ENCODE measurements at regions of chr9 and their contacts with region 1.

Region 1: DNA sequence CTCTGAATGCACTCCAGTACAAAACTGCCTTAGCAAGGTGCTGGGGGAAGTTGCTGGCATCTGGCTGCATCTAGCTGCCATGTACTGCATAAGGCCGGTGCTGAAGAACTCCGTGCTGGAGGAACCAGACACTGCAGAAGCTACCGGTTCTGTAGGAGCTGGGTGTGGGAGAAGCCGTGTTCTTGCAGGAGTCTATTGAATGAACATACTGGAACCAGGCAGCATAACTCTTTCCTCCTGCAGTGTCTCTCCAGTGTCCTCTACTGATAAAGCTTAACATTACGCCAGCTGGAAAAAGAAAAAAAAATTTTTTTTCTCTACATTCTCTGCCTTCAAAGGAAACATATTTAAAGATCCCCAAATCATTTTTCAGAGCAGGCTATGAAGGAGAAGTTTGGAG is 38.5 kb downstream of the VPS13A start:
- DNase-seq: no peak
- ATAC-seq: no peak
- H3K4me3 ChIP-seq: no peak overlapping the region
- H3K4me3 Mint-ChIP-seq: no peak overlapping the region
- H3K27ac ChIP-seq: no peak overlapping the region
- H3K27ac Mint-ChIP-seq: no peak overlapping the region
- H3K4me1 ChIP-seq: no peaks in the 10 kb centered on the region
- H3K4me1 Mint-ChIP-seq: no peaks in the 10 kb centered on the region
- H3K27me3 ChIP-seq: no peaks in the 10 kb centered on the region
- H3K27me3 Mint-ChIP-seq: no peaks in the 10 kb centered on the region
- CTCF ChIP-seq: no peak

Region 2: GRCh38 chr9:77163884-77164283 is 52.0 kb before region 1 on chr9:
- CTCF ChIA-PET with region 1: interaction called, 14 read pairs
- POLR2A ChIA-PET with region 1: no interaction called
- intact Hi-C with region 1: loop called (anchors 5 kb)
- DNase-seq: no peak
- ATAC-seq: no peak
- H3K4me3 ChIP-seq: no peak overlapping the region
- H3K4me3 Mint-ChIP-seq: no peak overlapping the region
- H3K27ac ChIP-seq: no peak overlapping the region
- H3K27ac Mint-ChIP-seq: no peak overlapping the region
- H3K4me1 ChIP-seq: no peaks in the 10 kb centered on the region
- H3K4me1 Mint-ChIP-seq: no peaks in the 10 kb centered on the region
- H3K27me3 ChIP-seq: no peaks in the 10 kb centered on the region
- H3K27me3 Mint-ChIP-seq: peaks cover 24% of the 10 kb centered on the region
- CTCF ChIP-seq: no peak

Region 3: GRCh38 chr9:77183581-77183980 is 32.3 kb before region 1 on chr9:
- CTCF ChIA-PET with region 1: no interaction called
- POLR2A ChIA-PET with region 1: no interaction called
- intact Hi-C with region 1: no loop called
- DNase-seq: no peak
- ATAC-seq: no peak
- H3K4me3 ChIP-seq: no peak overlapping the region
- H3K4me3 Mint-ChIP-seq: no peak overlapping the region
- H3K27ac ChIP-seq: no peak overlapping the region
- H3K27ac Mint-ChIP-seq: no peak overlapping the region
- H3K4me1 ChIP-seq: peaks cover 6 to 8% of the 10 kb centered on the region in 2 donors
- H3K4me1 Mint-ChIP-seq: peaks cover 19% of the 10 kb centered on the region
- H3K27me3 ChIP-seq: no peaks in the 10 kb centered on the region
- H3K27me3 Mint-ChIP-seq: no peaks in the 10 kb centered on the region
- CTCF ChIP-seq: no peak